Activated T-helper 2 cell treated with anti-CD3 and anti-CD28 coated beads, Interferon-gamma antibody, Interleukin-2, Interleukin-4, amounts not matched to agents 10 μg/mL and 5 μg/mL and 100 μg/mL, durations not matched to agents 14 hours and 24 hours and 36 hours (primary cell): ENCODE measurements at regions of chr6 and their contacts with region 1.

Region 1: GRCh38 chr6:41463062-41463930 is 82.9 kb upstream of the FOXP4 start:
- DNase-seq: no peak
- H3K4me3 Mint-ChIP-seq: no peak overlapping the region
- H3K27ac Mint-ChIP-seq: no peak overlapping the region
- H3K4me1 Mint-ChIP-seq: no peaks in the 10 kb centered on the region
- H3K27me3 Mint-ChIP-seq: peaks cover 37% of the 10 kb centered on the region

Region 2: DNA sequence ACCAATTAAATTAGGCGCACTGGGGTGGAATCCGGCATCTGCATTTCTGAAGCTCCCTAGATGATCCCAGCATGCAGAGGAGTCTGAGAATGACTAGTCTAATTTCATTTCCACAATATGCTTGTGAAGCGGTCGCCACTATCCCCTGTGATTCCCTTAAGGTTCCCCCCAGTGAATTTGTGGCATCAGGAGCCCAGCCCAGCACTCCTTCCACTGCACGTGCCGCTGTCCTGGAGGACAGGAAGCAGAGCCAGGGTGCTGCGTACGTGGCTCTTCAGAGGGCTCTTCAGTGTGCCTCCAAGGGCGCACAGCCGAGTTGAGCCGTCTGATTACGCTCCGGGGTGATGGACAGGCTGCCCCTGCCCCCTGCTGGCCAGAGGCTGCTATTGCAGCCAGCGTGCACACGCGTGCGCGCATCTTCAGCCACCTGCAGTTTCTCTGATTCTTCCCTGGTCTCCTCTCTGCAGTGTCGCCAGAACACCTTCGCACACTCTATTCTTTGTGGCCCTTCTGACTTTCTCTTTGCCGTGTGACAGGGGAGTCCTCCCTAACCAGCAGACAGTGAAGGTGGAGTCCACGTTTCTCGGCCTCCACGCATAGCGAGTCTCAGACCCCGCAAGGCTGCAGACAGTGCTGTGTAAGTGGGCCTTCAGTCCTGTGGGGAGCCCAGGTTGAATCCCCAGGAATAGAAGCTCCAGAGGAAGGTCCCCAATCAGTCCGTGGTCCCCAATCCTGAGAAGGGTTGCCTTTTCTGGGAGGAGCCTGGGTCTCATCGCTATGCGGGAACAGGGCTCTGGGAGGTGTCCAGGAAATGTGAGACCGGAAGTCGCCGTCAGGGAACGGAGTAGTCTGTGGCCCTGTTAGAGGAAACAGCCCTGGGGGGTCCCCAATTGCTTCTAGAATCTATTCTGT is 144.4 kb before region 1 on chr6:
- intact Hi-C with region 1: no loop called
- DNase-seq: peak; percentile 75
- H3K4me3 Mint-ChIP-seq: peak overlapping the region; percentile 23
- H3K27ac Mint-ChIP-seq: peak overlapping the region; percentile 21
- H3K4me1 Mint-ChIP-seq: peaks cover 16% of the 10 kb centered on the region
- H3K27me3 Mint-ChIP-seq: peaks cover 40% of the 10 kb centered on the region

Region 3: GRCh38 chr6:41527721-41528590 is 64.7 kb after region 1 on chr6:
- intact Hi-C with region 1: no loop called
- DNase-seq: no peak
- H3K4me3 Mint-ChIP-seq: no peak overlapping the region
- H3K27ac Mint-ChIP-seq: no peak overlapping the region
- H3K4me1 Mint-ChIP-seq: peaks cover 16% of the 10 kb centered on the region
- H3K27me3 Mint-ChIP-seq: peaks cover 57% of the 10 kb centered on the region

Region 4: GRCh38 chr6:41591859-41592502 is 128.7 kb after region 1 on chr6:
- intact Hi-C with region 1: loop called (anchors 2 kb)
- DNase-seq: peak; percentile 65
- H3K4me3 Mint-ChIP-seq: no peak overlapping the region
- H3K27ac Mint-ChIP-seq: no peak overlapping the region
- H3K4me1 Mint-ChIP-seq: peaks cover 1% of the 10 kb centered on the region
- H3K27me3 Mint-ChIP-seq: no peaks in the 10 kb centered on the region